ENCODE measurements at regions of chr5 and their contacts with region 1.

Region 1: DNA sequence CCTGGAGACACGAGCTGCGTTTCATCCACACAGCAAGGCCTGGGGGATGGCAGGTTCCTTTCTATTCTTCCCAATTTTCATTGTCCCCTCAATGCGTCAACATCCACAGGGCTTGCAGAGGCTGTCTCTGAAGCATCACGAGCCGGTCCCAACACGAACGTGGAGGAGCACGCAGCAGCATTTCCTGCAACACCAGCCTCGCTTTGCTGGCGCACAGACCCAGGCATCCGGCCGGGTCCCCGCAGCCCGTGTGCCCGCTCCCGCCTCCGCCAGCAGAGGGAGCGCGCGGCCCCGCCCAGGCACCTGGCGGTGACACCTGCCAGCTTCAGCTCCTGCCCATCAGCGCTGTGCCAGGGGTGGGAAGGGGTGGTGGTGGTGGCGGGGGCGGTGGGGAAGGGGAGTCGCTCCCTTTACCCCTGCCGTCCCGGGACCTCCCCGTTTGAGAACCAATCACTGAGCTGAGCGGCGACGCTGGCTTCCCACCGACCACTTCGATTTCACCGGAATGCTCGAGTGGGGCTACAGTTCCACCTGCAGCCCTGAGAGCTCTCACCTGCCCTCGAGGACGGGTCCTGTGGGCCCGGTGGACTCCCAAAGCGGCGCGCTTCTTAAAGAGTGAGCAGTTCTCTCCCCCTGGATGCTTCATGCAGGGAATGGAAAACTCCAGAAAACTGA is 464.5 kb downstream of the ICE1 start:
- DNase-seq: peak; percentile 77
- CTCF ChIP-seq: peak; percentile 95

Region 2: GRCh38 chr5:5492087-5492933 is 394.6 kb before region 1 on chr5:
- in situ Hi-C with region 1: loop called (anchors 25 kb)
- DNase-seq: peak; percentile 66
- CTCF ChIP-seq: peak; percentile 73

Region 3: GRCh38 chr5:6576861-6577501 is 690.0 kb after region 1 on chr5:
- in situ Hi-C with region 1: loop called (anchors 25 kb)
- DNase-seq: peak; percentile 73
- CTCF ChIP-seq: peak; percentile 57